CD4-positive, alpha-beta T cell (primary cell): ENCODE measurements at regions of chr2 and their contacts with region 1.

Region 1: GRCh38 chr2:68441179-68441993 is 25.7 kb downstream of the FBXO48 start:
- DNase-seq: peak; percentile 52 to 92 (median 70)
- ATAC-seq: peak; percentile 96
- H3K4me3 ChIP-seq: no peak overlapping the region
- H3K4me3 Mint-ChIP-seq: no peak overlapping the region
- H3K27ac ChIP-seq: peak overlapping the region in 1 of 2 donors; percentile 26
- H3K27ac Mint-ChIP-seq: peak overlapping the region; percentile 38
- H3K4me1 ChIP-seq: peaks cover 9% of the 10 kb centered on the region
- H3K4me1 Mint-ChIP-seq: peaks cover 8% of the 10 kb centered on the region
- H3K27me3 ChIP-seq: no peaks in the 10 kb centered on the region
- H3K27me3 Mint-ChIP-seq: no peaks in the 10 kb centered on the region
- CTCF ChIP-seq: peak; percentile 97

Region 2: GRCh38 chr2:68121873-68122679 is 319.3 kb before region 1 on chr2:
- CTCF ChIA-PET with region 1: interaction called, 8 read pairs
- POLR2A ChIA-PET with region 1: no interaction called
- intact Hi-C with region 1: loop called in 1 of 2 experiments (anchors 1 kb)
- DNase-seq: peak; percentile 63 to 86 (median 74)
- ATAC-seq: peak; percentile 56
- H3K4me3 ChIP-seq: no peak overlapping the region
- H3K4me3 Mint-ChIP-seq: no peak overlapping the region
- H3K27ac ChIP-seq: no peak overlapping the region
- H3K27ac Mint-ChIP-seq: no peak overlapping the region
- H3K4me1 ChIP-seq: peaks cover 4% of the 10 kb centered on the region
- H3K4me1 Mint-ChIP-seq: peaks cover 5% of the 10 kb centered on the region
- H3K27me3 ChIP-seq: no peaks in the 10 kb centered on the region
- H3K27me3 Mint-ChIP-seq: no peaks in the 10 kb centered on the region
- CTCF ChIP-seq: peak; percentile 99

Region 3: GRCh38 chr2:68135448-68136320 is 305.7 kb before region 1 on chr2:
- CTCF ChIA-PET with region 1: no interaction called
- POLR2A ChIA-PET with region 1: no interaction called
- intact Hi-C with region 1: loop called in 1 of 2 experiments (anchors 5 kb)
- DNase-seq: no peak
- ATAC-seq: no peak
- H3K4me3 ChIP-seq: no peak overlapping the region
- H3K4me3 Mint-ChIP-seq: no peak overlapping the region
- H3K27ac ChIP-seq: no peak overlapping the region
- H3K27ac Mint-ChIP-seq: no peak overlapping the region
- H3K4me1 ChIP-seq: no peaks in the 10 kb centered on the region
- H3K4me1 Mint-ChIP-seq: no peaks in the 10 kb centered on the region
- H3K27me3 ChIP-seq: no peaks in the 10 kb centered on the region
- H3K27me3 Mint-ChIP-seq: no peaks in the 10 kb centered on the region
- CTCF ChIP-seq: no peak

Region 4: GRCh38 chr2:68282811-68283418 is 158.5 kb before region 1 on chr2:
- CTCF ChIA-PET with region 1: no interaction called
- POLR2A ChIA-PET with region 1: no interaction called
- intact Hi-C with region 1: loop called in 1 of 2 experiments (anchors 5 kb)
- DNase-seq: peak in 8 of 14 experiments; percentile 3 to 74 (median 24)
- ATAC-seq: peak; percentile 73
- H3K4me3 ChIP-seq: no peak overlapping the region
- H3K4me3 Mint-ChIP-seq: no peak overlapping the region
- H3K27ac ChIP-seq: no peak overlapping the region
- H3K27ac Mint-ChIP-seq: no peak overlapping the region
- H3K4me1 ChIP-seq: no peaks in the 10 kb centered on the region
- H3K4me1 Mint-ChIP-seq: no peaks in the 10 kb centered on the region
- H3K27me3 ChIP-seq: peaks cover 0 to 4% of the 10 kb centered on the region in 2 experiments
- H3K27me3 Mint-ChIP-seq: peaks cover 36% of the 10 kb centered on the region
- CTCF ChIP-seq: peak; percentile 83

Region 5: GRCh38 chr2:68362069-68362468 is 79.3 kb before region 1 on chr2:
- CTCF ChIA-PET with region 1: interaction called, 4 read pairs
- POLR2A ChIA-PET with region 1: no interaction called
- intact Hi-C with region 1: loop called (anchors 1 kb)
- DNase-seq: peak; percentile 66 to 92 (median 74)
- ATAC-seq: peak; percentile 98
- H3K4me3 ChIP-seq: no peak overlapping the region
- H3K4me3 Mint-ChIP-seq: peak overlapping the region; percentile 81
- H3K27ac ChIP-seq: no peak overlapping the region
- H3K27ac Mint-ChIP-seq: no peak overlapping the region
- H3K4me1 ChIP-seq: peaks cover 7% of the 10 kb centered on the region
- H3K4me1 Mint-ChIP-seq: peaks cover 14% of the 10 kb centered on the region
- H3K27me3 ChIP-seq: no peaks in the 10 kb centered on the region
- H3K27me3 Mint-ChIP-seq: peaks cover 20% of the 10 kb centered on the region
- CTCF ChIP-seq: peak; percentile 82